ENCODE measurements at regions of chr11 and their contacts with region 1.

Region 1: GRCh38 chr11:65425105-65425970 is 2.7 kb downstream of the NEAT1 start:
- DNase-seq: peak; percentile 72 to 98 (median 82)
- ATAC-seq: peak; percentile 48
- H3K4me3 ChIP-seq: peak overlapping the region; percentile 76 to 95
- H3K4me3 Mint-ChIP-seq: peak overlapping the region; percentile 94
- H3K27ac ChIP-seq: peak overlapping the region; percentile 99 to 100
- H3K27ac Mint-ChIP-seq: peak overlapping the region; percentile 98
- H3K4me1 ChIP-seq: peaks cover 53% of the 10 kb centered on the region
- H3K4me1 Mint-ChIP-seq: peaks cover 66% of the 10 kb centered on the region
- H3K27me3 ChIP-seq: no peaks in the 10 kb centered on the region
- H3K27me3 Mint-ChIP-seq: no peaks in the 10 kb centered on the region
- CTCF ChIP-seq: no peak

Region 2: GRCh38 chr11:65382033-65382807 is 43.1 kb before region 1 on chr11 and contains the start of gene SLC25A45:
- CTCF ChIA-PET with region 1: interaction called, 3 read pairs
- POLR2A ChIA-PET with region 1: interaction called, 12 read pairs
- intact Hi-C with region 1: loop called in 1 of 2 experiments (anchors 1 kb)
- DNase-seq: peak; percentile 77 to 96 (median 92)
- ATAC-seq: peak; percentile 83
- H3K4me3 ChIP-seq: peak within 1 kb of the TSS; percentile 60 to 98
- H3K4me3 Mint-ChIP-seq: peak within 1 kb of the TSS; percentile 87
- H3K27ac ChIP-seq: peak within 1 kb of the TSS; percentile 97 to 100
- H3K27ac Mint-ChIP-seq: peak within 1 kb of the TSS; percentile 99
- H3K4me1 ChIP-seq: peaks cover 54% of the 10 kb centered on the region
- H3K4me1 Mint-ChIP-seq: peaks cover 42% of the 10 kb centered on the region
- H3K27me3 ChIP-seq: no peaks in the 10 kb centered on the region
- H3K27me3 Mint-ChIP-seq: no peaks in the 10 kb centered on the region
- CTCF ChIP-seq: peak; percentile 81
- total RNA-seq, gene SLC25A45: 27.8 to 29.6 TPM

Region 3: GRCh38 chr11:65471410-65471762 is 46.0 kb after region 1 on chr11:
- CTCF ChIA-PET with region 1: interaction called, 5 read pairs
- POLR2A ChIA-PET with region 1: interaction called, 94 read pairs
- intact Hi-C with region 1: loop called (anchors 2 kb)
- DNase-seq: peak in 5 of 9 experiments; percentile 20 to 52 (median 36)
- ATAC-seq: peak; percentile 1
- H3K4me3 ChIP-seq: peak overlapping the region; percentile 11 to 42
- H3K4me3 Mint-ChIP-seq: no peak overlapping the region
- H3K27ac ChIP-seq: peak overlapping the region; percentile 60 to 87
- H3K27ac Mint-ChIP-seq: peak overlapping the region; percentile 98
- H3K4me1 ChIP-seq: peaks cover 17% of the 10 kb centered on the region
- H3K4me1 Mint-ChIP-seq: peaks cover 23% of the 10 kb centered on the region
- H3K27me3 ChIP-seq: no peaks in the 10 kb centered on the region
- H3K27me3 Mint-ChIP-seq: no peaks in the 10 kb centered on the region
- CTCF ChIP-seq: no peak

Region 4: DNA sequence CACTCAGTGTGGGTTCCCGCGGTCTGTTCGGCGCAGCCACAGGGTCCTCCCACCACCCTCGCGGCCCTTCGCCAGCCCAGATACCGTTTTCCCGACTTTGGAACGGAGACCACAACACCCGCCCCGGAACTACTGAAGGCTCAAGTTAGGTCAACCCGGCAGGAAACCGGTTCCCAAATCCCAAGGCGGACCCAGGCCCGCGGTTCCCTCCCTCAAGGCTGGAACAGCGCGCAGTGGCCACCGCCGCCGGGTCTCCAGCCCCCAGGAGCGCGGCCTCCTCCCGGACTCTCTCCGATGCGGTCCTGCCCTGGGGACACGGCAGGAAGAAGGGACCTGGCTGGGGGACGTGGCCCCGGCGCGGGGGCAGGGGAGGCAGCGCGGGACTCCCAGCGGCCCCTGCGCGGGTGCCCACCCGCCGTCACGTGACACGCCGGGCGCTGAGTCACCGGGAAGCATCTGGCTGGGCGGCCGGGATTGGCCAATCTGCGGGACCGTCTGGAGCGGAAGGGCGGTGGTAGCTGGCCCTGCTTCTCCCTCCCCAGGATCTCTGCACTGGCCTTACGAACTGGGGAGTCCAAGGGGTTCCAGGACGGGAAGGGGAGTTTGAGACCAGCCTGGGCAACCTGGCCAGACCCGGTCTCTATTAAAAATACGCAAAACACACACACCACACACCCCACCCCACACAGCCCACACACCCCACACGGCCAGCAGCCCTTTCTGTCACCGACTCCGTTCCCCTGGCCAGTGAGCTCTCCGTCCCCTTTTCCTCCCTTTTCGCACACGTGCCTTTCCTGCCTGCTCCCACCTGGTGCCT is 52.0 kb after region 1 on chr11:
- CTCF ChIA-PET with region 1: no interaction called
- POLR2A ChIA-PET with region 1: interaction called, 94 read pairs
- intact Hi-C with region 1: loop called (anchors 2 kb)
- DNase-seq: peak; percentile 71 to 94 (median 91)
- ATAC-seq: peak; percentile 78
- H3K4me3 ChIP-seq: peak overlapping the region; percentile 89 to 92
- H3K4me3 Mint-ChIP-seq: peak overlapping the region; percentile 100
- H3K27ac ChIP-seq: peak overlapping the region; percentile 89 to 98
- H3K27ac Mint-ChIP-seq: peak overlapping the region; percentile 100
- H3K4me1 ChIP-seq: peaks cover 12% of the 10 kb centered on the region
- H3K4me1 Mint-ChIP-seq: peaks cover 21% of the 10 kb centered on the region
- H3K27me3 ChIP-seq: no peaks in the 10 kb centered on the region
- H3K27me3 Mint-ChIP-seq: no peaks in the 10 kb centered on the region
- CTCF ChIP-seq: no peak